ENCODE measurements at regions of chr21 and their contacts with region 1.

Region 1: GRCh38 chr21:35051287-35051818 is 2.3 kb upstream of the RUNX1 start:
- DNase-seq: peak; percentile 86
- H3K4me3 Mint-ChIP-seq: peak overlapping the region; percentile 93
- H3K27ac Mint-ChIP-seq: peak overlapping the region; percentile 97
- H3K4me1 Mint-ChIP-seq: peaks cover 52% of the 10 kb centered on the region
- H3K27me3 Mint-ChIP-seq: no peaks in the 10 kb centered on the region

Region 2: DNA sequence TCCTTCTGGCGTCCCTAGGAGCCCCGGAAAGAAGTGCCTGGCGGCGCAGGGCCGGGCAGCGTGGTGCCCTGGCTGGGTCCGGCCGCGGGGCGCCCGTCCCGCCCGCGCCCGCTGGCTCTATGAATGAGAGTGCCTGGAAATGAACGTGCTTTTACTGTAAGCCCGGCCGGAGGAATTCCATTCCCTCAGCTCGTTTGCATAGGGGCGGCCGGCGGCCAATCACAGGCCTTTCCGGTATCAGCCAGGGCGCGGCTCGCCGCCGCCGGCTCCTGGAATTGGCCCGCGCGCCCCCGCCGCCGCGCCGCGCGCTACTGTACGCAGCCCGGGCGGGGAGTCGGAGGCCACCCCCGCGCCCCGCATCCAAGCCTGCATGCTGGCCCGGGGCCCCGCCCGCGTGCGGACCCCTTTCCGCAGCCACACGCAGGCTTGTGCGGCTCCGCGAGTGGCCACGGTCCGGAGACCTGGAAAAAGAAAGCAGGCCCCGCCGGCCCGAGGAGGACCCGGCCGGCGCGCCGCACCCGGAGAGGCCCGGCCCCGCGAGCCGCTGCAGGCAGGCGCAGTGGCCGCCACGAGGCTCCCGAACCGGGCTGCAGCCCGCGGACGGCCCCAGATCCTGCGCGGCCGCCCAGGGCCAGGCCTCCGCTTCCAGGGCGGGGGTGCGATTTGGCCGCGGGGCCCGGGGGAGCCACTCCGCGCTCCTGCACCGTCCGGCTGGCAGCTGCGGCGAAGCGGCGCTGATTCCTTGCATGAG is 162.6 kb before region 1 on chr21:
- CTCF ChIA-PET with region 1: interaction called, 27 read pairs
- POLR2A ChIA-PET with region 1: interaction called, 11 read pairs
- DNase-seq: peak; percentile 80
- H3K4me3 Mint-ChIP-seq: peak overlapping the region; percentile 89
- H3K27ac Mint-ChIP-seq: peak overlapping the region; percentile 98
- H3K4me1 Mint-ChIP-seq: peaks cover 52% of the 10 kb centered on the region
- H3K27me3 Mint-ChIP-seq: no peaks in the 10 kb centered on the region

Region 3: GRCh38 chr21:35026617-35027562 is 24.5 kb before region 1 on chr21:
- CTCF ChIA-PET with region 1: interaction called, 14 read pairs
- POLR2A ChIA-PET with region 1: interaction called, 4 read pairs
- DNase-seq: peak; percentile 89
- H3K4me3 Mint-ChIP-seq: peak overlapping the region; percentile 70
- H3K27ac Mint-ChIP-seq: peak overlapping the region; percentile 98
- H3K4me1 Mint-ChIP-seq: peaks cover 92% of the 10 kb centered on the region
- H3K27me3 Mint-ChIP-seq: no peaks in the 10 kb centered on the region

Region 4: DNA sequence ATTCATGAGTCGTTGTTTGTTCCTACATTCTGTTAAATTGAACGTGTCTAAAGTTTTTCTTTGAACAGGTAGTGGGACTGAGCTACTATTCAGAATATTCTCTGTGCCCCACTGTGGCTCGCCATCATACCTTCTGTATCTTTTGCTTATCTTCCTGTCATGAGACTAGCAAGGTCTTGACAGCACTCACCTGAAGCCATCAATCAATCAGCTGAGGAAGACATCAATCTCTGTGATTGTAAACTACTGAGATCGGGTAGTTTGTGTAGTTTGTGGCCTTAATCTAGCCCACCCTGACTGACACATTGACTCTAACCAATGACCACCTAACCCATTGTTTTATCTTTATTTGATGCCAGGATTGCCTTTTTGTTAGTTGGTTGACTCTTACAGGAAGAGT is 15.5 kb after region 1 on chr21:
- CTCF ChIA-PET with region 1: interaction called, 13 read pairs
- POLR2A ChIA-PET with region 1: no interaction called
- DNase-seq: no peak
- H3K4me3 Mint-ChIP-seq: no peak overlapping the region
- H3K27ac Mint-ChIP-seq: no peak overlapping the region
- H3K4me1 Mint-ChIP-seq: peaks cover 6% of the 10 kb centered on the region
- H3K27me3 Mint-ChIP-seq: no peaks in the 10 kb centered on the region

Region 5: DNA sequence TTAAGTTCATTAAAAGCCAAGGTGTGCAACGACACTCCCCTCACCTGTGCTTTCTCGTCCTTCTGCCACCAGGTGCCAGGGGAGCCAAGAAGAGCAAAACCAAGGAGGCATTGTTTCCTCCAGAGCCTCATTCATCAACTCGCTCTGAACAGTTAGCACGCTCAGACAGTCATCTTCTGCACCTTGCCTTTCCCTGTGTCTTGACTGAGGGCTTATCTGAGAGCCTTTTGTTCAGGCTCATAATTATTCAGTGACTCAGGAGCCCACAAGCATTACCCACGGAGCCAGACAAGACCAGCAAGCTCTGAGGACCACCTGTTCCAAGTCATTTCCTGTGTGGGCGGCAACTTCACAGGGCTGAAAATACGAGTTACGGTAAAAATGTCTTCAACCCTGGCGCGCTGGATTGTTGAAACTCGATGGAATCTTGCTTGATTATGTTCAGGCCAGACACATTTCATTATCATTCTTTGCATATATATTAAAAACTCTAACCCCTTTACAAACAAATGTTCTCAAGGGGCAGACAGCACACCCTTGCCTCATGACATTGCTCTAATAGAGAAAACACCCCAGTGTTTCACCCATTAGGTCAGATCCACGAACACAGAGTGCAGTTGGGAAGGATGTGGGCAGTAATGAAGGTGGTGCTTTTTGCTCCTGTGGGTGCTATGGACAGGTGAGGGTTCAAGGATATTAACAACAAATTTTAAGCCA is 87.5 kb after region 1 on chr21:
- CTCF ChIA-PET with region 1: no interaction called
- POLR2A ChIA-PET with region 1: no interaction called
- DNase-seq: peak; percentile 21
- H3K4me3 Mint-ChIP-seq: no peak overlapping the region
- H3K27ac Mint-ChIP-seq: no peak overlapping the region
- H3K4me1 Mint-ChIP-seq: peaks cover 10% of the 10 kb centered on the region
- H3K27me3 Mint-ChIP-seq: no peaks in the 10 kb centered on the region

Region 6: DNA sequence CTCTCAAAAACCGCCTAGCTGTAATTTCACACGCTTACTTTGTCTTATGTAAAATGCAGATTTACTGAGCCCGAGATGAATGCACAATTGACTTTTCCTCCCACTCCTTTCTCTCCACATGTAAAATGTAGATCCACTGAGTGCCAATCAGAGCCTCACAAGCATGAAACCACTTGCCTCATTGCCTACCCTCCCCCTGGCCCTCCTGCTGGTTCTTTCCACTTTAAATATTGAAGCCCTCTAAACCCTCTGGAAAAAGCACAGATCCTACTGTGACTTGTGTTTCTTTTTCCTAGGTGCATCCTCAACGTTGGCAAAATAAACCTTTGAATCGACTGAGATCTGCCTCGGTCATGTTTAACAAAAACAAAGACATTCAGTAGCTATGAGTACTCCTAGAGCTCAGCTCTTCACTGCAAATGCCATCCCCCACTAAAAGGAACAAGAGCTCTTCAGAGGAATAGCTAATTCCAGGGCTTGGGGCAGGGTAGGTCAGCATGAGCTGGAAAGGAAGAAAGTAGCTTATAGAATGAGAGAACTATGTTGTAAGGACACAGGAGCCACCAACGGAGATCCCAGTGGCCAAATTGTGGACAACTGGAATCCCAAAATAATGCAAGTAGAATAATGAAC is 363.3 kb after region 1 on chr21:
- CTCF ChIA-PET with region 1: no interaction called
- POLR2A ChIA-PET with region 1: no interaction called
- DNase-seq: no peak
- H3K4me3 Mint-ChIP-seq: no peak overlapping the region
- H3K27ac Mint-ChIP-seq: no peak overlapping the region
- H3K4me1 Mint-ChIP-seq: no peaks in the 10 kb centered on the region
- H3K27me3 Mint-ChIP-seq: peaks cover 4% of the 10 kb centered on the region